ENCODE measurements at regions of chr3 and their contacts with region 1.

Region 1: GRCh38 chr3:132504375-132504933 is 87.2 kb downstream of the DNAJC13 start:
- DNase-seq: peak; percentile 18
- ATAC-seq: peak; percentile 63
- H3K4me3 ChIP-seq: no peak overlapping the region
- H3K27ac ChIP-seq: no peak overlapping the region
- H3K4me1 ChIP-seq: no peaks in the 10 kb centered on the region
- H3K27me3 ChIP-seq: no peaks in the 10 kb centered on the region
- CTCF ChIP-seq: no peak
- POLR2A ChIP-seq: no peak
- RAD21 ChIP-seq: no peak

Region 2: GRCh38 chr3:131636266-131636775 is 868.1 kb before region 1 on chr3:
- CTCF ChIA-PET with region 1: no interaction called
- POLR2A ChIA-PET with region 1: no interaction called
- dilution Hi-C with region 1: no loop called
- in situ Hi-C with region 1: no loop called
- intact Hi-C with region 1: no loop called
- DNase-seq: no peak
- ATAC-seq: no peak
- H3K4me3 ChIP-seq: no peak overlapping the region
- H3K27ac ChIP-seq: no peak overlapping the region
- H3K4me1 ChIP-seq: no peaks in the 10 kb centered on the region
- H3K27me3 ChIP-seq: no peaks in the 10 kb centered on the region
- CTCF ChIP-seq: no peak
- POLR2A ChIP-seq: no peak
- RAD21 ChIP-seq: no peak

Region 3: DNA sequence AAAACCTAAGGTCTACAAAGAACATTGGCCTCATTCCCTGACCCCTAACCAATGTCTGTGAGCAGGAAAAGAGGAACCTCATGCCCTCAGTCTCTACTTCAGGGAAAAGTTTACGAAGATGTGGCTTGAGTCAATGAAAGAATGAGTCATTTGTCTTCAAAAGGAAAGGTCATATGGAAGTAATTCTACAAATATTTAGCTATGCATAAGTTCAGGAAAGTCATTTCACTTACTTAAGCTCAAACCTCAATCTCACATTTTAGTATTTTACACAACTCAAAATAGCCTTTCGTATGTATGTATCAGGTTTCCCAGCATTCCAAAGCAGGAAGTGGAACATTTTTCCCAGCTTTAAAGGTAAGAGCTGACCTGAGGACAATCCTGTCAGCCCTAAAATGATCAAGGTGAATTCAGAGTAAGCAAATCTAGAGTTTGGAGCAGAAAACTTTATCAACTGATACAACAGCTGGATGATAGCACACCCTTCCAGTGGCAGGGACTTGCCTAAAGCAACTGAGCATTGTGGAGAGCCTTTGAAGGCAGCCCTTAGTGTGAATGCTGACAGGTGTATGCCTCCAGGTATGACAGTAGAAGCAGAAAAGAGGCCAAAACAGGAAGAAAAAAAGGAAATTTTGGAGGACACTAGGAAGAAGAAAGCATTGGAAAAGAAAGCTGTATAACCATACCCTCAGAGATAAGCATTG is 38.7 kb after region 1 on chr3:
- CTCF ChIA-PET with region 1: no interaction called
- POLR2A ChIA-PET with region 1: no interaction called
- dilution Hi-C with region 1: no loop called
- in situ Hi-C with region 1: no loop called
- intact Hi-C with region 1: no loop called
- DNase-seq: peak; percentile 97
- ATAC-seq: peak; percentile 89
- H3K4me3 ChIP-seq: no peak overlapping the region
- H3K27ac ChIP-seq: peak overlapping the region; percentile 98
- H3K4me1 ChIP-seq: peaks cover 25% of the 10 kb centered on the region
- H3K27me3 ChIP-seq: no peaks in the 10 kb centered on the region
- CTCF ChIP-seq: no peak
- POLR2A ChIP-seq: no peak
- RAD21 ChIP-seq: no peak

Region 4: DNA sequence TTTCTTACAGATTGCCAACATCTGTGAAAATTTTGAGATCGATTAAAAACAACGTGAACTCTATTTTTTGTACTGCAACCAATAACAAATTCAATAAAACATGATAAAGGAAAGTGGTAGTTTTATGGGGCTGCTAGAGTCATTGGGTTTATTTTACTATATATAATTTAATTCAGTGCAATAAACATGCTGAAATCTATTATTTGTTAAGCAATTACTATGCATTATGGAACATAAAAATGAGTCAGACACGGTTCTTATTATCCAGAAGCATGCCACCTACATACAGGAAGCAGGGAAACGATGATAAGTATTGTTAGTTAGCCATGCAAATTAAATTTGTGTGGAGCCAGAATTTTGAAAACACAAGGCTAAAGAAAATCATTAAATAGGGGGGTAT is 190.5 kb after region 1 on chr3:
- CTCF ChIA-PET with region 1: no interaction called
- POLR2A ChIA-PET with region 1: no interaction called
- dilution Hi-C with region 1: no loop called
- in situ Hi-C with region 1: no loop called
- intact Hi-C with region 1: loop called (anchors 5 kb)
- DNase-seq: no peak
- ATAC-seq: no peak
- H3K4me3 ChIP-seq: no peak overlapping the region
- H3K27ac ChIP-seq: no peak overlapping the region
- H3K4me1 ChIP-seq: peaks cover 2% of the 10 kb centered on the region; the same call in 1 of the 2 replicates
- H3K27me3 ChIP-seq: no peaks in the 10 kb centered on the region
- CTCF ChIP-seq: no peak
- POLR2A ChIP-seq: no peak
- RAD21 ChIP-seq: no peak

Measured in IMR-90 (cell line).